ENCODE measurements at regions of chr4 and their contacts with region 1.

Region 1: DNA sequence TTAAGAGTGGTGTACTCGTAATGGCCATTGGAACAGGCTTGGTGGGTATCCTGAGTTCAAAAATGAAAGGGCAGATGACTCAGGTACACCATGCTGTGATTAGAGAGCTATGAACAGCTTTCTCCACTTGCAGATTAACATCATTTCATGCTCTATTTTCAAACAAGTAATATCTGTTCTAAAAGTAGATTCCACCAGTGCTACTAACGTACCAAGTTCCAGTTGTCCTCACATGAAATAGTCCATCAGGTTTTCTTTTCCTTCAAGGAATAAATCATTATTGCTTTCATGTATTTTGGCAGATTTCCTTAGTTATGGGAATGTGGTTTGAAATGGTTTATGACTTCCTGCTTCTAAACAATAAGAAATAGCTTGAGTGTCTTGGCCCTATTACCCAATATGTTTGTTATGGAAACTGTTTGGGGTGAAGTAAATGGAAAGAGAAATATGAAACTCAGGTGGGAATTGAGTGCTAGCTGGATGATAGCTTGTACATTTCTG is 49.9 kb downstream of the PCDH7 start:
- DNase-seq: peak; percentile 93
- H3K4me3 ChIP-seq: no peak overlapping the region
- H3K27ac ChIP-seq: peak overlapping the region; percentile 60
- H3K4me1 ChIP-seq: peaks cover 59% of the 10 kb centered on the region
- H3K27me3 ChIP-seq: no peaks in the 10 kb centered on the region
- CTCF ChIP-seq: no peak
- POLR2A ChIP-seq: peak; percentile 21

Region 2: DNA sequence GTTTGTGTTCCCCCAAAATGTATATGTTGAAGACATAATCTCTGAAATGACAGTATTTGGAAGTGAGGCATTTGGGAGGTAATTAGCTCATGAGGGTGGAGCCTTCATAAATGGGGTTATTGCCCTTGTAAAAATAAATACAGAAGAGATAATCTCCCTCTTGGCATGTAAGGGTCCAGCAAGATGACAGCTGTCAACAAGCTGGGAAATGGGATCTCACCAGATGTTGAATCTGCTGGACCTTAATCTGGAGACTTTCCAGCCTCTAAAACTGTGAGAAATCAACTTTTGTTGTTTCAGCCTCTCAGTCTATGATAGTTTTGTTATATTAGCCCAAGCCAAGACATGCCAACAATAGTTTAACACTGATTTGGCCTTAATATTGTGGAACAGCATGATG is 488.1 kb before region 1 on chr4:
- CTCF ChIA-PET with region 1: no interaction called
- POLR2A ChIA-PET with region 1: no interaction called
- dilution Hi-C with region 1: no loop called
- intact Hi-C with region 1: no loop called
- DNase-seq: no peak
- H3K4me3 ChIP-seq: no peak overlapping the region
- H3K27ac ChIP-seq: no peak overlapping the region
- H3K4me1 ChIP-seq: no peaks in the 10 kb centered on the region
- H3K27me3 ChIP-seq: no peaks in the 10 kb centered on the region
- CTCF ChIP-seq: no peak
- POLR2A ChIP-seq: no peak

Region 3: DNA sequence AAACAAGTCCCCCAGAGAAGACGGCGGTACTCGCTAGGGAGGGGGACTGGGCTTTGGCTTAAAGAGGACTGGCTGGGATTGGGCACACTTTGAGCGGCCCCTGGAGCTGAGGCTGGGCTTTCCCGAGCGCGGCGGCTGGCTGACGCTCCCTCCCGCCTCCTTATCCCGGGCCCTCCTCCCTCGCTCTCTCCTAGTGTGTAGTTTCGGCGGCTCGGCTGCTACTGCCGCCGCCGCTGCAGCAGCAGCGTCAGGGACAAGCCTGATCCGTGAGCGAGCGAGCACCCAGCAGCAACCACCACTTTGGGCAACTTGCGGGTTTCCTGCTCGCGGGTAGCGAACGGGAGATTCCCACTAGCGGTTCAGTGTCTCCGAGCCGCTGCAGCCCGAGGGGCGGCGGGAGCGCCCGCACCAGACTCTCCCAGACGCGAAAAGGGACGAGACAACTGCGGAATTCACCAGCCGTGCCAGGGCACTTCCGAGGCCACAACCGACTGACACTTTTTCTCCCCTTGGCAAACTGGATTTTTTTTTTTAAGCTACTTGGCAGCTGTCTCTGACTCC is 50.6 kb before region 1 on chr4:
- CTCF ChIA-PET with region 1: interaction called, 29 read pairs
- POLR2A ChIA-PET with region 1: no interaction called
- dilution Hi-C with region 1: no loop called
- intact Hi-C with region 1: loop called (anchors 1 kb)
- DNase-seq: peak; percentile 80
- H3K4me3 ChIP-seq: peak overlapping the region; percentile 34 to 53 (median 47)
- H3K27ac ChIP-seq: peak overlapping the region; percentile 57
- H3K4me1 ChIP-seq: peaks cover 35% of the 10 kb centered on the region
- H3K27me3 ChIP-seq: no peaks in the 10 kb centered on the region
- CTCF ChIP-seq: no peak
- POLR2A ChIP-seq: peak; percentile 28

Region 4: DNA sequence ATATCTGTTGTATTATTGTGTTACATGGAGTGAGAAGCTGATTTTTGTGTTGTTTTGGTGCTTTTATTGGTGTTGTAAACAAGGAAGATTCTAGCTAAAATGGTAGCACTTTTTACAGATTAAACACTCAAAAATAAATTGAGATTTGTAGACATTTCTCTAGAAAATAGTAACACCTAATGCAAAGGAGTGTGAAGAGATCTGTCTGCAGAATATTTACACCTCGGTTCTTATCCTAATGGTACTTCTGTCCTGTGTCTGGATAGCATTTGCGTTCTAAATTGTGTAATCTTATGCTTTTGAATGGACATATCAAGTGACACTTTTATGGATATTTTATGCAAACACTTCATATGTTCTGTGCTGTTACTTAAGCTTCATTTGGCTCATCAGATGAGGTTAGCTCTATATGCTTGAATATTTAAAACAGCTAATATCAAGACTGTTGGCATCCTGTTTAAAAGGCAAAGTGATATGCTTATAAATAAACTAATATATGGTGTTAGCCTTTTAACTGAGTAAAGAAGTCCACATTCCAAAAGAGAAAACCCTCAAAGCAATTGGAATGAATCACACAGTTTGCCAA is 43.9 kb before region 1 on chr4:
- CTCF ChIA-PET with region 1: interaction called, 23 read pairs
- POLR2A ChIA-PET with region 1: interaction called, 3 read pairs
- dilution Hi-C with region 1: no loop called
- intact Hi-C with region 1: loop called (anchors 1 kb)
- DNase-seq: peak; percentile 80
- H3K4me3 ChIP-seq: peak overlapping the region; percentile 4 to 63 (median 29)
- H3K27ac ChIP-seq: peak overlapping the region; percentile 48
- H3K4me1 ChIP-seq: peaks cover 66% of the 10 kb centered on the region
- H3K27me3 ChIP-seq: no peaks in the 10 kb centered on the region
- CTCF ChIP-seq: no peak
- POLR2A ChIP-seq: no peak

Region 5: GRCh38 chr4:30757357-30757756 is 12.7 kb before region 1 on chr4:
- CTCF ChIA-PET with region 1: interaction called, 12 read pairs
- POLR2A ChIA-PET with region 1: interaction called, 4 read pairs
- dilution Hi-C with region 1: no loop called
- intact Hi-C with region 1: no loop called
- DNase-seq: peak; percentile 90
- H3K4me3 ChIP-seq: no peak overlapping the region
- H3K27ac ChIP-seq: peak overlapping the region; percentile 56
- H3K4me1 ChIP-seq: peaks cover 67% of the 10 kb centered on the region
- H3K27me3 ChIP-seq: no peaks in the 10 kb centered on the region
- CTCF ChIP-seq: no peak
- POLR2A ChIP-seq: no peak

Region 6: DNA sequence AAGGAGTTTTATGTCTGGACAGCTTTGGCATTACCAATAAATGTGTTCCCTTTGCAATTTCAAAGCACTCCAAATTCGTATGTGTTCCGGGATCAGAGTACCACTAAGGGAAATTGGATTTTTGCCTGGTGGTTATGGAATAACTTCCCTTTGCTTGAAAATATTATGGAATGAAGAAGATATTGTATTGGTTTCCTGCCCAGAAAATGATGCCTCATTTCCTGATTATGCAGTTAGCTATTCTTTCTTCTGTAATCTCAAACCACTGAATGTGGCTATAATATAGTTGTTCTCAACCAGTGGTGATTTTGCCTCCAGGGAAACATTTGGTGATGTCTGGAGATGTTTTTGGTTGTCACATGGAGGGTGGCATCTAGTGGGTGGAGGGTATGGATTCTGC is 92.9 kb after region 1 on chr4:
- CTCF ChIA-PET with region 1: no interaction called
- POLR2A ChIA-PET with region 1: no interaction called
- dilution Hi-C with region 1: no loop called
- intact Hi-C with region 1: loop called (anchors 5 kb)
- DNase-seq: peak; percentile 80
- H3K4me3 ChIP-seq: no peak overlapping the region
- H3K27ac ChIP-seq: peak overlapping the region; percentile 31
- H3K4me1 ChIP-seq: peaks cover 12% of the 10 kb centered on the region
- H3K27me3 ChIP-seq: no peaks in the 10 kb centered on the region
- CTCF ChIP-seq: no peak
- POLR2A ChIP-seq: no peak

Region 7: GRCh38 chr4:30948653-30949052 is 178.6 kb after region 1 on chr4:
- CTCF ChIA-PET with region 1: no interaction called
- POLR2A ChIA-PET with region 1: no interaction called
- dilution Hi-C with region 1: no loop called
- intact Hi-C with region 1: loop called (anchors 5 kb)
- DNase-seq: peak; percentile 29
- H3K4me3 ChIP-seq: no peak overlapping the region
- H3K27ac ChIP-seq: no peak overlapping the region
- H3K4me1 ChIP-seq: peaks cover 18% of the 10 kb centered on the region
- H3K27me3 ChIP-seq: no peaks in the 10 kb centered on the region
- CTCF ChIP-seq: no peak
- POLR2A ChIP-seq: no peak

Region 8: DNA sequence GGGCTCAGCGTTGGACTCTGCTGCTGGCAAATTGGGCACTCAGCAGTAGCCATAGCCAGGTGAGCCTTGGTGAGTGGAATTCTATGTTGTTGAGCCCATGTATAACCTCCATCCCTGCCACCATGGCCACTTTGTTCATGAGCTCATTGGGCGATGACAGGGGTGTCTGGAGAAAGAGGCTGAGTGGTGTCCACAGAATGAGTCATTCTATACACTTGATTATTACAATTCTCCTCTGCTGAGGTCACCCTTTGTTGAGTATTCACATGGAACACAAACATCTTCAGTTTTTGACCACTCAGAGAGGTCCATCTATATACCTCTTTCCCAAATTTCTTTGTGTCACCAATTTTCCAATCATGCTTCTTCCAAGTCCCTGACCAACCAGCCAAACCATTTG is 1291.8 kb after region 1 on chr4:
- CTCF ChIA-PET with region 1: no interaction called
- POLR2A ChIA-PET with region 1: no interaction called
- dilution Hi-C with region 1: no loop called
- intact Hi-C with region 1: no loop called
- DNase-seq: no peak
- H3K4me3 ChIP-seq: no peak overlapping the region
- H3K27ac ChIP-seq: no peak overlapping the region
- H3K4me1 ChIP-seq: no peaks in the 10 kb centered on the region
- H3K27me3 ChIP-seq: no peaks in the 10 kb centered on the region
- CTCF ChIP-seq: no peak
- POLR2A ChIP-seq: no peak